ENCODE measurements at regions of chr7 and their contacts with region 1.

Region 1: DNA sequence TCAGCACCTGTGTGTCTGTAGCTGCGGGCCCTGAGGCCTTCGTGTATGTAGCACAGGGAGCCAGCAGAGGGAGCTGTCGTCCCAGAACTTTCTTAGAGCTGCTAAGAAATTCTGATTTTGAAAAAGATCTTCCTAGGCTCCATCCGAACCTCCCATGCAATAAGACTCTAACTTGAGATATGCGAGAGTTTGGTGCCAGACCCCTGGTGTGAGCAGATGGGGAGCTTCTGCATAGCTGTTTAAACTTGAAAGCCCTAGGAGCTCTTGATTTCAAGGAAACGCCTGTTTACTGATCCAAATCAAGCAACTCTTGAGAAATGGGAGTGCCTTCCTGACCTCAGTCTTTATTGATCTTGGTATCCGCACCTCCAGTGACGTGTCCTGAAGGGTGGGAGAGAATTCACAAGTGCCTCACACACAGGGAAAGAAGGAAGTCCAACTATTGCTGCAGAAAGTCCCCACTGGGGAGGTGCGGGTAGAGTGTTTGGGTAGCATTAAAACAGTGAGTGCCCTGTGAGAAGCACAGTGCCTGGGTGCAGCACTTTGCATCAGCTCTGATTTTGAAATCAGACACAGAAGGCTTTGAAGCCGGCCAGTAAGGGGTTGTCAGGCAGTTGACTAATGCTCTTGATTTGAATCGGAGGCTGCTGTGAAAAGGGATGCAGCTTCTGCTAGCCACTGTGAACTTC is 66.4 kb upstream of the STRIP2 start:
- DNase-seq: peak; percentile 71 to 77
- H3K4me3 ChIP-seq: no peak overlapping the region
- H3K4me3 Mint-ChIP-seq: peak overlapping the region; percentile 44
- H3K27ac Mint-ChIP-seq: no peak overlapping the region
- H3K4me1 ChIP-seq: no peaks in the 10 kb centered on the region
- H3K4me1 Mint-ChIP-seq: peaks cover 13% of the 10 kb centered on the region
- H3K27me3 ChIP-seq: no peaks in the 10 kb centered on the region
- H3K27me3 Mint-ChIP-seq: no peaks in the 10 kb centered on the region
- CTCF ChIP-seq: peak; percentile 88 to 94

Region 2: DNA sequence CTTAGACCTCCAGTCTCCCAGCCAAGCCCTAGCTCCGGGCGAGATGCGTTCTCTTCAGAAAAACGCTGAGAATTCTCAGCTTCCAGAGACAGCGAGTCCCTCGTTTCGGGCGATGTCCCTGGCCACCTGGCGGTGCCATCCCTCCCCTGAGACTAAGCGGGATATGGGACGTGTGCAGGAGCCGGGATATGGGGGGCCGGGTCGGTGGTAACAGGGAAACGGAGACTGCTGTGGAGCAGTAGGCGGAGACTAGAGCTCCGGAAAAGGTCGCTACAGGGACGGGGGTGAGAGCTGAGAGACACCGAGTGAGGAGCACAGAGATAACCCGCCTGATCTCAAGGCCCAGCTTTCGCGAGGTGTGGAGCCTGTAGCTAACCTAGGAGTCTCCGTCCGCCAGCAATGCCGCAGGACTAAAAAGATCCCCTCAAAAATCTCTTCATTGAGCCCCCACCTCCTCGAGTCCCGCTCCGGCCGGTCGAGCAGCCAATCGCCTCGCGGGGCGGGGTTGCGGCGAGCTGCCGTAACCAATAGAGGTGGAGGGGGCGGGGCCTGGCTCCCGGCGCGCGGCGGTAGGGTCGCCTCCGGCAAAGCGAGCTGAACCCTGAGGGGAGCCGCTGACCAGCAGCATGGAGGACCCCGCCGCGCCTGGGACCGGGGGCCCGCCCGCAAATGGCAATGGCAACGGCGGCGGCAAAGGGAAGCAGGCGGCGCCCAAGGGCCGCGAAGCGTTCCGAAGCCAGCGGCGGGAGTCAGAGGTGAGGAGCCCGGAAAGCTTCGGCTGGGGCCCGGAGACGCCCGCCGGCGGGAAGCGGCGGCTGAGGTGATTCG is 66.2 kb after region 1 on chr7 and contains the start of gene STRIP2:
- CTCF ChIA-PET with region 1: interaction called, 24 read pairs
- POLR2A ChIA-PET with region 1: no interaction called
- intact Hi-C with region 1: loop called (anchors 2 kb)
- DNase-seq: peak; percentile 92 to 96
- H3K4me3 ChIP-seq: peak within 1 kb of the TSS; percentile 87
- H3K4me3 Mint-ChIP-seq: peak within 1 kb of the TSS; percentile 99
- H3K27ac Mint-ChIP-seq: peak within 1 kb of the TSS; percentile 87
- H3K4me1 ChIP-seq: no peaks in the 10 kb centered on the region; the same call in 1 of the 2 replicates
- H3K4me1 Mint-ChIP-seq: peaks cover 8% of the 10 kb centered on the region
- H3K27me3 ChIP-seq: no peaks in the 10 kb centered on the region
- H3K27me3 Mint-ChIP-seq: peaks cover 7% of the 10 kb centered on the region
- CTCF ChIP-seq: peak in 1 of 2 experiments; percentile 39
- total RNA-seq, gene STRIP2: 5.8 and 6.5 TPM in 2 replicates

Region 3: GRCh38 chr7:129454249-129454551 is 86.4 kb after region 1 on chr7:
- CTCF ChIA-PET with region 1: no interaction called
- POLR2A ChIA-PET with region 1: no interaction called
- intact Hi-C with region 1: no loop called
- DNase-seq: no peak
- H3K4me3 ChIP-seq: no peak overlapping the region
- H3K4me3 Mint-ChIP-seq: no peak overlapping the region
- H3K27ac Mint-ChIP-seq: no peak overlapping the region
- H3K4me1 ChIP-seq: 0 out of 2 replicates have a peak, but pooled peaks cover 6% of the 10 kb centered on the region
- H3K4me1 Mint-ChIP-seq: no peaks in the 10 kb centered on the region
- H3K27me3 ChIP-seq: no peaks in the 10 kb centered on the region
- H3K27me3 Mint-ChIP-seq: no peaks in the 10 kb centered on the region
- CTCF ChIP-seq: no peak

Region 4: DNA sequence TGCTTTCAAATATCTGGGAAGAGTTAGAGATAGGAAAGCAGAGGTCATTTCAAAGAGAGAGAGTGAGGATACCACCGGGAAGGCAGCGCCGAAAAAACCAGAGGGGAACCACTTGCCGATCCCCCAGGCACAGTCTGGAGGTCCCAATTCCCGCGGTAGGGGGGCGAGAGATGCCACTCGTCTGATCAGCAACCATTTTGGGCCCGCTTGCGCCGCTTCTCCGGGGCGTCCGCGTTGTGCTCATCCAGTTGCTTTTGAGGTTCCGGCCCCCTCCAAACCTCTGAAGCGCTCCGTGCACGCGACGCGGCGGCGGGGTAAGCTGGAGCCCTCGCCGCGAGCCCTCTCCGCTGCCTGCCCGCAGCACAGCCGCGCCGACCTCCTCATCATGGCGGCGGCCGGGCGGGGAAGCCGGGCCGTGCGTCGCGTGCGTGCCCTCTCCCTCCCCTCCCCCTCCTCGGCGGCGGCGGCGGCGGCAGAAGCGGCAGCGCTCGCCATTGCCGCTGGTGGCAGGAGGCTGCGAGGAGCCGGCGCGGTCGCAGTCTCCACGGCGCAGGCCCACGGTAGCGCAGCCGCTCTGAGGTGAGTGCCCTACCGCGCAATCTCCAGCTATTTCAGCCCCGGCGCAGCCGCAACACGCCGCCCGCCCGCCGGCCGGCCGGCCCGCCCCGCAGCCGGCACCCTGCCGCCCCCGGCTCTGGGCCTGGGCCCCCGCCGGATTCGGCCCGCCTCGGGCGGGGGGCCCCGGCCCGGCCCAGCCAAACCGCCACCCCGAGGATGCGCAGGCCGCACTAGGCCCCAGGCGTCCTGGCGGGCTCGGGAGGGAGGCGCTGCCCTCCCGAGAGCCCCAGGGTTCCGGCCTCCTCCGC is 243.6 kb after region 1 on chr7 and contains the start of gene NRF1:
- CTCF ChIA-PET with region 1: no interaction called
- POLR2A ChIA-PET with region 1: interaction called, 13 read pairs
- intact Hi-C with region 1: no loop called
- DNase-seq: peak; percentile 90 to 96
- H3K4me3 ChIP-seq: peak within 1 kb of the TSS; percentile 87
- H3K4me3 Mint-ChIP-seq: peak within 1 kb of the TSS; percentile 98
- H3K27ac Mint-ChIP-seq: peak within 1 kb of the TSS; percentile 97
- H3K4me1 ChIP-seq: peaks cover 10% of the 10 kb centered on the region; the same call in 1 of the 2 replicates
- H3K4me1 Mint-ChIP-seq: peaks cover 7% of the 10 kb centered on the region
- H3K27me3 ChIP-seq: no peaks in the 10 kb centered on the region
- H3K27me3 Mint-ChIP-seq: no peaks in the 10 kb centered on the region
- CTCF ChIP-seq: peak in 1 of 2 experiments; percentile 5
- total RNA-seq, gene NRF1: 22.5 and 23.0 TPM in 2 replicates

Region 5: GRCh38 chr7:129644634-129645230 is 276.9 kb after region 1 on chr7:
- CTCF ChIA-PET with region 1: interaction called, 7 read pairs
- POLR2A ChIA-PET with region 1: no interaction called
- intact Hi-C with region 1: loop called (anchors 2 kb)
- DNase-seq: peak in 1 of 2 experiments; percentile 40
- H3K4me3 ChIP-seq: no peak overlapping the region
- H3K4me3 Mint-ChIP-seq: no peak overlapping the region
- H3K27ac Mint-ChIP-seq: no peak overlapping the region
- H3K4me1 ChIP-seq: no peaks in the 10 kb centered on the region
- H3K4me1 Mint-ChIP-seq: no peaks in the 10 kb centered on the region
- H3K27me3 ChIP-seq: no peaks in the 10 kb centered on the region
- H3K27me3 Mint-ChIP-seq: no peaks in the 10 kb centered on the region
- CTCF ChIP-seq: peak; percentile 49 to 51

Region 6: GRCh38 chr7:129655811-129656210 is 288.0 kb after region 1 on chr7:
- CTCF ChIA-PET with region 1: no interaction called
- POLR2A ChIA-PET with region 1: no interaction called
- intact Hi-C with region 1: no loop called
- DNase-seq: no peak
- H3K4me3 ChIP-seq: no peak overlapping the region
- H3K4me3 Mint-ChIP-seq: no peak overlapping the region
- H3K27ac Mint-ChIP-seq: no peak overlapping the region
- H3K4me1 ChIP-seq: no peaks in the 10 kb centered on the region
- H3K4me1 Mint-ChIP-seq: no peaks in the 10 kb centered on the region
- H3K27me3 ChIP-seq: no peaks in the 10 kb centered on the region
- H3K27me3 Mint-ChIP-seq: no peaks in the 10 kb centered on the region
- CTCF ChIP-seq: no peak